ENCODE measurements at regions of chr2 and their contacts with region 1.

Region 1: GRCh38 chr2:9630749-9631483 is at the start of gene YWHAQ:
- DNase-seq: peak; percentile 94 to 99 (median 96)
- ATAC-seq: peak; percentile 86 to 88
- H3K4me3 Mint-ChIP-seq: peak within 1 kb of the TSS; percentile 90 to 97 (median 94)
- H3K27ac Mint-ChIP-seq: peak within 1 kb of the TSS; percentile 80 to 97 (median 95)
- H3K4me1 Mint-ChIP-seq: peaks cover 19 to 56% (median 52%) of the 10 kb centered on the region in 4 donors
- H3K27me3 Mint-ChIP-seq: no peaks in the 10 kb centered on the region
- polyA plus RNA-seq, gene YWHAQ: 195 to 348 (median 236) TPM

Region 2: DNA sequence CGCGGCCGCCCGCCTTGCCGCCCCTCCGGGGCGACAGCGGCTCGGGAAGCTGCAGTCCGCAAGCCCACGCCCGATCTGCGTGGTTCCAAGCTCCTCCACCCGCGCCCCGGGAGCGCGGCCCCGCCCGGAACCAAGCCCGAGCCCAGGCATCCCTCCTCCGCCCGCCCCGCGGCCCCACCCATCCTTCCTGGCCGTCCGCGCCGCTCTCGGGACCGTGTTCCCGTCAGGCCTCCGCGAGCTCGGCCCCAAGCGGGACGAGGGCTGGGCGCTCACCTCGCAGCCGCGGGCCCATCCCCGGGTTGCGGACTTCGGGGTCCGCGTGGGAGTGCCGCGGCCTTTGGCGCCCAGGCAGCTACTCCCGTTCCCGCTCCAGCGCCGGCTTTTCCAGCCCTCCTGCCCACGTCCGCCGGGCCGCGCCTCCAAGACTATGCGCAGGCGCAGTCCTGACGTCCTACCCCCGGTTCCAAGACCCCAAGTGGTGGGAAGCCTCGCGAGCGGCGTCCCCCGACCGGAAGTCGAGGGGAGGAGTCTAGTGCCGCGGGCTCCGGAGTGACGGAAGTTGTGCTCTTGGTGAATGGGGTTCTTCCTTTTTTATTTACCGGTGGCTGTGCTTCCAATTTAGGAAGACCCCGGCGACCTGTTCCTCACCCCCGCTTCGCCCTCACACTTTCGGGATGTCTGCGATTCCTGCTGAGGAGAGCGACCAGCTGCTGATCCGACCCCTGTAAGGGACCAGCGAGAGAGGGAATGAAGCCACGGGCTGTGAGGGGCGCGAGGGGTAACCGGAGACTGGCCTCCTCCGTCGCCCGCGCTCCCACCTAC is 207.6 kb before region 1 on chr2 and contains the starts of genes CPSF3 and ITGB1BP1:
- POLR2A ChIA-PET with region 1: interaction called, 16 read pairs
- DNase-seq: peak; percentile 96 to 98 (median 98)
- ATAC-seq: peak; percentile 88 to 90
- H3K4me3 Mint-ChIP-seq: peak within 1 kb of the TSS in 5 of 10 donors; percentile 91 to 93 (median 93)
- H3K27ac Mint-ChIP-seq: peak within 1 kb of the TSS in 9 of 10 donors; percentile 90 to 99 (median 94)
- H3K4me1 Mint-ChIP-seq: peaks cover 24 to 38% (median 32%) of the 10 kb centered on the region in 4 donors
- H3K27me3 Mint-ChIP-seq: no peaks in the 10 kb centered on the region
- polyA plus RNA-seq, gene CPSF3: 21.3 to 32.3 (median 24.4) TPM
- polyA plus RNA-seq, gene ITGB1BP1: 122 to 136 (median 136) TPM

Region 3: DNA sequence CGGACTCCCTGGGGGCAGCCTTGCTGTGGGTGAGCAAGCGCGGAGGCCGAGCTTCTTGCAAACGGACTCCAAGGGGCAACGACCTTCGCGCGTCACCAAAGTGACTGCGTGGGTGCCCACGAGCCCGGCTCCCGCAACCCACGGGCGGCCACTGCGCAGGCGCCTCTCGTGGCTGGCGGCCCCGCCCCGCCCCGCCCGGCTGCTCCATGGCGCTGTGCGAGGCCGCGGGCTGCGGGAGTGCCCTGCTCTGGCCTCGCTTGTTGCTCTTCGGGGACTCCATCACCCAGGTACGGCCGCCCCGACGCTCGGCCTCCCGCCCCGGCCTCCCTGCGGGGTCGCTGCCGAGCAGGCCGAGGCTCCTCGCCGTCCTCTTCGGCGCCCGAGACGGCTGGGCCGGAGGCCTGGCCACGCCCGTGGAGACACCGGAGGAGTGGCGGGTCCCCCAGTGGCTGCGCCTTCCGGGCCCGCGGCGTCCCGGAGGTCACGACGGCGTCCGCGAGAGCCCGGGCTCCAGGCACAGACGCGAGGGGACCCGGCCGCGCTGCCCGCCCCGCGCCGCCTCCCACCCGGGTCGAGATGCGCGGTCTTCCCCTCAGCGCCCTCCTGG is 156.5 kb before region 1 on chr2 and contains the start of gene IAH1:
- POLR2A ChIA-PET with region 1: interaction called, 22 read pairs
- DNase-seq: peak; percentile 62 to 87 (median 76)
- ATAC-seq: peak; percentile 81 to 84
- H3K4me3 Mint-ChIP-seq: peak within 1 kb of the TSS; percentile 76 to 89 (median 84)
- H3K27ac Mint-ChIP-seq: peak within 1 kb of the TSS; percentile 61 to 97 (median 92)
- H3K4me1 Mint-ChIP-seq: peaks cover 17 to 55% (median 43%) of the 10 kb centered on the region in 4 donors
- H3K27me3 Mint-ChIP-seq: no peaks in the 10 kb centered on the region
- polyA plus RNA-seq, gene IAH1: 61.8 to 81.5 (median 66.6) TPM

Region 4: GRCh38 chr2:9555297-9556141 is 75.4 kb before region 1 on chr2 and contains the start of gene ADAM17:
- POLR2A ChIA-PET with region 1: interaction called, 30 read pairs
- DNase-seq: peak; percentile 68 to 86 (median 80)
- ATAC-seq: peak; percentile 89 to 93
- H3K4me3 Mint-ChIP-seq: peak within 1 kb of the TSS; percentile 94 to 99 (median 96)
- H3K27ac Mint-ChIP-seq: peak within 1 kb of the TSS; percentile 93 to 98 (median 96)
- H3K4me1 Mint-ChIP-seq: peaks cover 26 to 63% (median 56%) of the 10 kb centered on the region in 4 donors
- H3K27me3 Mint-ChIP-seq: no peaks in the 10 kb centered on the region
- polyA plus RNA-seq, gene ADAM17: 6.9 to 7.8 (median 7.7) TPM

Region 5: GRCh38 chr2:9613291-9613690 is 17.6 kb before region 1 on chr2:
- POLR2A ChIA-PET with region 1: interaction called, 16 read pairs
- DNase-seq: no peak
- ATAC-seq: no peak
- H3K4me3 Mint-ChIP-seq: no peak overlapping the region
- H3K27ac Mint-ChIP-seq: peak overlapping the region in 1 of 10 donors; percentile 65
- H3K4me1 Mint-ChIP-seq: peaks cover 41 to 96% (median 91%) of the 10 kb centered on the region in 4 donors
- H3K27me3 Mint-ChIP-seq: no peaks in the 10 kb centered on the region

Region 6: DNA sequence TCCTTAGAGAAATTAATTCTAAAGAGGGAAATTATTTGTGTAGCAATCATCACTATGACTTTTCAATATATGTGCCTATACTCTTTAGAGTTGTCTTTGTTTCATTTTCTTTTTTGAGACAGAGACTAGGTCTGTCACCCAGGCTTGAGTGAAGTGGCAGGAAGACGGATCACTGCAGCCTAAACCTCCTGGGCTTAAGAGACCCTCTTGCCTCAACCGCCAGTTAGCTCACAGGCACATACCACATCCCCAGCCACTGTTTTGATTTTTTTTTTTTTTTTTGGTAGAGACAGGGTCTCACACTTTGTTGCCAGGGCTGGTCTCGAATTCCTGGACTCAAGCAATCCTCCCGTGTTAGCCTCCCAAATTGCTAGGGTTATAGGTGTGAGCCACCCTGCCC is 12.5 kb before region 1 on chr2:
- POLR2A ChIA-PET with region 1: interaction called, 11 read pairs
- DNase-seq: peak in 9 of 10 donors; percentile 5 to 67 (median 49)
- ATAC-seq: peak; percentile 93 to 97
- H3K4me3 Mint-ChIP-seq: peak overlapping the region; percentile 49 to 88 (median 76)
- H3K27ac Mint-ChIP-seq: peak overlapping the region; percentile 65 to 97 (median 91)
- H3K4me1 Mint-ChIP-seq: peaks cover 36 to 95% (median 91%) of the 10 kb centered on the region in 4 donors
- H3K27me3 Mint-ChIP-seq: no peaks in the 10 kb centered on the region